ENCODE measurements at regions of chr17 and their contacts with region 1.

Region 1: GRCh38 chr17:45353043-45353442 is 36.2 kb upstream of the MAP3K14 start:
- DNase-seq: peak; percentile 69
- H3K4me3 Mint-ChIP-seq: peak overlapping the region; percentile 23
- H3K27ac Mint-ChIP-seq: peak overlapping the region; percentile 86
- H3K4me1 Mint-ChIP-seq: peaks cover 36% of the 10 kb centered on the region
- H3K27me3 Mint-ChIP-seq: peaks cover 27% of the 10 kb centered on the region

Region 2: DNA sequence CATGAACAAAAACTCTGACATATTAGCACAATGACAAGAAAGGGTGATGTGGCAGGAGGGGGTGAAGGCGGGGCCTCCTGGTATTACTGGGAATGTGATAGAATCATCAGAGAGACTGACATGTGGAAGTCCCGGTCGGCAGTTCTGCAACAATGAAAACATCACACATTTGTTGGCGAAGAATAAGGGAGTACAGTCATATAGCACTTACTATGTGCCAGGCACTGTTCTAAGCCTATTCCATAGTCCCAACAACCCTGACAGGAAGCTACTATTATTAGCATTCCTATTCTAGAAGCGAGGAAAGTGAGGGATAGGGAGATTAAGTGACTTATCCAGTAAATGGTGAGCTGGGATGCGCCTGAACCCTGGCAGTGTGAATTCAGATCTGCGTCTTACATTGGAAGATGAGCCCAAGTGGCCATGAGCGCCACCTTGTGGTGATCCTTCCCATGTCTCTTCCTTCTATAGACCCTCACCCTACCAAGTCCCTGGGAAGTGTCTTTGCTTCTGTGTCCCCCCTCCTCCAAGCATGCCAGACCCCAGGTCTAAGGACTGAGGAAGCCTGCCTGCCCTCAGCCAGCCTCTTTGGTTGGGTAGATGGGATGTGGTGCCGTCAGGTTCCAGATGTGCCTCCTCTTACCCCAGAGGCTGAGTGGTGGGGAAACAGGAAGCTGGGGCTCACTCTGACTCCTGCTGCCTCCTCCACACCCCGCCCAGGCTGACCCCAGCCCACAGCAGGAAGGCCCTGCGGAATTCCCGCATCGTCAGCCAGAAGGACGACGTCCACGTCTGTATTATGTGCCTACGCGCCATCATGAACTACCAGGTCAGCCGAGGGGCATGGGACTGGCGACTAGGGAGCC is 117.4 kb before region 1 on chr17:
- intact Hi-C with region 1: no loop called
- DNase-seq: peak; percentile 92
- H3K4me3 Mint-ChIP-seq: peak overlapping the region; percentile 55
- H3K27ac Mint-ChIP-seq: peak overlapping the region; percentile 83
- H3K4me1 Mint-ChIP-seq: peaks cover 60% of the 10 kb centered on the region
- H3K27me3 Mint-ChIP-seq: no peaks in the 10 kb centered on the region

Region 3: DNA sequence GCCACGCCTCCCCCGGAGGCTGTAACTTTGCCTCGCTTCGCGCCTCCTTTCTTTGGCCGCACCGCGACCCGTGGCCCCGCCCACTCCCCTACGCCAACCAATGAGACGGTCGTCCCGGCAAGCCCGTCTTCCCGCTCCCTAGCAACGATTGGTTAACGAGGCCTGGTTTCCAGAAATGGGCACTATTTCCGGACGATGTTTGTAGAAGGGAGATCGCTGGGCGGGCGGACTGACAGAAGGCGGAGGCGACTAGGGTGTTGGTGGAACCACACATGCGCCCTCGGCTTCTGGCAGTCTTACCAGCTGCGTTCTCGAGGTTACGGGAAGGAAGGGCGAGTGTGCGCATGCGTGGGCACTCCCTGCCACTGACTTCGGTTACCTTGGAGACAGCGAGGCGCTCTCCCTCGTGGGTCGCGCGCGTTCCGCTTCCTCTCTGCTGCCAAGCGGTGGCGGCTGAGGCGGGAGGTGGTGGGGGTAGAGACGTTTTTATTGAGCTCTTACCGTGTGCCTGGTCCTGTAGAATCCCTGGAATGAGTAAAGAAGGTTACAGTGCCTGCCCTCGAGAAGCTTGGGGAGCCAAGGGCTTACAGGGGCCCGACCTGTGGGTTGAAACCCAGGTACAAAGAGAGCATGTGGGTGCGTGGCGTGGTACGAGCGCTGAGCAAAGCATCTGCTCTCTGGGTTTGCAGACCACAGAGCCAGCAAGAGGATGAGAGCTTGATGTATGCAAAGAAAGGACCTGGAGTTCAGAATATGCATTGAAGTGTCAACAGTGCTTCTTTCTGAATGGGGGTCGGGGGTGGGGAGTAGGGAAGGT is 35.7 kb before region 1 on chr17:
- intact Hi-C with region 1: loop called (anchors 1 kb)
- DNase-seq: peak; percentile 100
- H3K4me3 Mint-ChIP-seq: peak overlapping the region; percentile 90
- H3K27ac Mint-ChIP-seq: peak overlapping the region; percentile 96
- H3K4me1 Mint-ChIP-seq: peaks cover 67% of the 10 kb centered on the region
- H3K27me3 Mint-ChIP-seq: peaks cover 3% of the 10 kb centered on the region